Endothelial cell of umbilical vein (primary cell): ENCODE measurements at regions of chr4 and their contacts with region 1.

Region 1: DNA sequence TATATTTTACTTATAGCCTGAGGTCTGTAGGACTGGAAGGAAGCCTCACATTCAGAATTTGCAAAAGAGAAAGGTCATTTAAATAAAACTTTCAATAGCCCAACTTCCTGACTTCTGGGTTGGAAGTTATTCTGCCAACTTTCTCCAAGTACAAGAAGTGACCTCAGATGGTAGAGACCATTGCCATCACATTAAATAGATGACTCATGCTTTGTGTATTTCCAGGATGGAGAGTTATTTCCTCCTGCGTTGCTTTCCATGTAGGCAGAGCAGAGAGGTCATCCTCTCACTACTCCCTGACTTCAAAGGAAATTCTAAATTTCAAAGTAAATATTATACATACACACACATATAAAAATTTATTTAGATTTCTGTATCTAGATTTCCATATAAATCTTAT is 73.0 kb upstream of the NR3C2 start:
- DNase-seq: peak; percentile 94
- H3K4me3 ChIP-seq: peak overlapping the region in 1 of 3 experiments; percentile 18
- H3K27ac ChIP-seq: peak overlapping the region; percentile 93
- H3K4me1 ChIP-seq: peaks cover 31% of the 10 kb centered on the region
- H3K27me3 ChIP-seq: no peaks in the 10 kb centered on the region
- CTCF ChIP-seq: no peak
- POLR2A ChIP-seq: peak; percentile 69

Region 2: GRCh38 chr4:147994076-147994475 is 521.2 kb before region 1 on chr4:
- CTCF ChIA-PET with region 1: no interaction called
- POLR2A ChIA-PET with region 1: no interaction called
- dilution Hi-C with region 1: no loop called
- intact Hi-C with region 1: loop called (anchors 10 kb)
- DNase-seq: peak; percentile 66
- H3K4me3 ChIP-seq: peak overlapping the region in 1 of 3 experiments; percentile 5
- H3K27ac ChIP-seq: peak overlapping the region; percentile 59
- H3K4me1 ChIP-seq: peaks cover 18% of the 10 kb centered on the region
- H3K27me3 ChIP-seq: no peaks in the 10 kb centered on the region
- CTCF ChIP-seq: no peak
- POLR2A ChIP-seq: no peak

Region 3: GRCh38 chr4:148225639-148226038 is 289.6 kb before region 1 on chr4:
- CTCF ChIA-PET with region 1: no interaction called
- POLR2A ChIA-PET with region 1: no interaction called
- dilution Hi-C with region 1: no loop called
- intact Hi-C with region 1: loop called (anchors 1 kb)
- DNase-seq: peak; percentile 70
- H3K4me3 ChIP-seq: no peak overlapping the region
- H3K27ac ChIP-seq: no peak overlapping the region
- H3K4me1 ChIP-seq: peaks cover 19% of the 10 kb centered on the region
- H3K27me3 ChIP-seq: no peaks in the 10 kb centered on the region
- CTCF ChIP-seq: no peak
- POLR2A ChIP-seq: no peak

Region 4: GRCh38 chr4:148355442-148356123 is 159.7 kb before region 1 on chr4:
- CTCF ChIA-PET with region 1: no interaction called
- POLR2A ChIA-PET with region 1: no interaction called
- dilution Hi-C with region 1: no loop called
- intact Hi-C with region 1: loop called (anchors 2 kb)
- DNase-seq: peak; percentile 93
- H3K4me3 ChIP-seq: peak overlapping the region in 2 of 3 experiments; percentile 19 to 23
- H3K27ac ChIP-seq: peak overlapping the region; percentile 81
- H3K4me1 ChIP-seq: peaks cover 42% of the 10 kb centered on the region
- H3K27me3 ChIP-seq: no peaks in the 10 kb centered on the region
- CTCF ChIP-seq: no peak
- POLR2A ChIP-seq: no peak

Region 5: DNA sequence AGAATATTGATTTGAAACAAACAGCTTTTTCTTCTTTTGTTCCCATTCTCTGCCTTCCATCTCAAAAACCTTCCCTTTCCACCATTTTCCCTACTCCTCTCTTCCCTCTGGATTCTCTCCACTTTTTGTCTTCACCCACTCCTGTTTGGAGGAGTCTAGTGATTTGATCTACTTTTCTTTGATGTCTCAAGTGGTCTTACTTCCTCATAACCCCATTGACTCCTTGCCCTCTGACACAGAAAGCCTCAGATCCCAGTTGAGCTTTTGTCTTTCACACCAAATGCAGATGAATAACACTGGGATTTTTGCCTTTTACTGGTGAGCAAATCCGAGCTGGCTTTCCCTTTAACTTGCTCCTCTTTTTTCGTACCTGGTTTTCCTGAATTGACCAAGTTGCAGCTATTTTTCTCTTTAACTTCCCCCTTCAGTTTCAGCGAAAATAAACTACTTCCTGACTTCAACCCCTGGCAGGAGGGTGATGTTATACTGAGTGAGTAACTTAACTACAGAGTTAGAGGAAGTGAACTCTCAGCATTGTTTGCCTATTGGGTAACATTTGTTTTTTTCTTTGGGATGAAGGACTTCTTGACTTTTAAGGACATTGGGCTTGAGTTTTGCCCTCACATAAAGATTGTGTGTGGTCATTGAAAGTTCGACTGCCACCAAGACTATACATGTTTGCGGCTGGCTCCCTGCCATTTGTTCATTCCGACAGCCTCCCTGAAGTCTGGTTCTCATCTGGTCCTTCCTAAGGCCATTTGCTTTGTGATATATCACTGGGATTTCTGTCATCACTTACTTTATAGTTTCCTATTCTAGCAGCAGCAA is 319.8 kb after region 1 on chr4:
- CTCF ChIA-PET with region 1: no interaction called
- POLR2A ChIA-PET with region 1: no interaction called
- dilution Hi-C with region 1: no loop called
- intact Hi-C with region 1: loop called (anchors 1 kb)
- DNase-seq: peak; percentile 89
- H3K4me3 ChIP-seq: no peak overlapping the region
- H3K27ac ChIP-seq: peak overlapping the region; percentile 94
- H3K4me1 ChIP-seq: peaks cover 43% of the 10 kb centered on the region
- H3K27me3 ChIP-seq: no peaks in the 10 kb centered on the region
- CTCF ChIP-seq: no peak
- POLR2A ChIP-seq: no peak